Dorsolateral prefrontal cortex (tissue), 120 donors: ENCODE measurements at regions of chr14 and their contacts with region 1.

Region 1: DNA sequence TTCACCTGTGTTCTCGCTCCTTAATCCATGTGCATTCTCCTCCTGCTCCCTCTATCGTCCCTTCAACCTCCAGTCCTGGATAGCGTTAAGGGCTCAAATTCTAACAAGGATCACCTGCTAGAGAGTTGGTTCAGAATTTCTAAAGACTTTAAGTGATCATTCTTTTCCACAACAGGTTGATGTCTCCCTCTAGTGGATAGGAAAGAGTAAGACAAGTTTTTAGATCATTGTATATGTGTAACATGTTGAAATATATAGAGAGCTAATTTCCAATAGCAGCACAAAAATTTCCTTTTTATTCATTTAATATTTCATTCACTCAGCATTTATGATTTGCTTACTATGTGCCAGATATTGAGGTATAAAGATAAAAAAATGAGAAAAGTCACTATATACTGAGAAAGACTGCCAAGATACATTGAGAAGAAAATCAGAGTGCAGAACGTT is 9.3 kb upstream of the ESR2 start:
- DNase-seq: no peak
- H3K4me3 ChIP-seq: no peak overlapping the region
- H3K27ac ChIP-seq: no peak overlapping the region
- H3K27me3 ChIP-seq: no peaks in the 10 kb centered on the region
- CTCF ChIP-seq: peak; percentile 70 to 96 (median 84)

Region 2: DNA sequence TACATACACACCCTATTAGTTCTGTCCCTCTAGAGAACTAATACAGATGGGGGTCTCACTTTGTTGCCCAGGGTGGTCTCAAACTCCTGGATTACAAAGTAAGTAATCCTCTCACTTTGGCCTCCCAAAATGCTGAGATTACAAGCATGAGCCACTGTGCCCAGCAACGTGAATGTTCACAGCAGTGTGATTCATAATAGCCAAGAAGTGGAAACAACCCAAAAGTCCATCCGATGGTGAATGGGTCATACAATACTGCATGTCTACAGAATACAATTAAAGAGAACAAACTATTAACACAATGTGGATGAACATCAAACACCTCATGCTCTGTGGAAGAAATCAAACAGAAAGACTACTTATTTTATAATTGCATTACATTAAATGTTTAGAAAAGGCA is 508.0 kb before region 1 on chr14:
- intact Hi-C with region 1: loop called (anchors 5 kb)
- DNase-seq: no peak
- H3K4me3 ChIP-seq: no peak overlapping the region
- H3K27ac ChIP-seq: no peak overlapping the region
- H3K27me3 ChIP-seq: no peaks in the 10 kb centered on the region
- CTCF ChIP-seq: no peak

Region 3: GRCh38 chr14:64005822-64006221 is 297.7 kb before region 1 on chr14:
- intact Hi-C with region 1: loop called (anchors 5 to 10 kb)
- DNase-seq: no peak
- H3K4me3 ChIP-seq: no peak overlapping the region
- H3K27ac ChIP-seq: no peak overlapping the region
- H3K27me3 ChIP-seq: peaks cover 0 to 6% (median 0%) of the 10 kb centered on the region in 45 donors
- CTCF ChIP-seq: no peak

Region 4: DNA sequence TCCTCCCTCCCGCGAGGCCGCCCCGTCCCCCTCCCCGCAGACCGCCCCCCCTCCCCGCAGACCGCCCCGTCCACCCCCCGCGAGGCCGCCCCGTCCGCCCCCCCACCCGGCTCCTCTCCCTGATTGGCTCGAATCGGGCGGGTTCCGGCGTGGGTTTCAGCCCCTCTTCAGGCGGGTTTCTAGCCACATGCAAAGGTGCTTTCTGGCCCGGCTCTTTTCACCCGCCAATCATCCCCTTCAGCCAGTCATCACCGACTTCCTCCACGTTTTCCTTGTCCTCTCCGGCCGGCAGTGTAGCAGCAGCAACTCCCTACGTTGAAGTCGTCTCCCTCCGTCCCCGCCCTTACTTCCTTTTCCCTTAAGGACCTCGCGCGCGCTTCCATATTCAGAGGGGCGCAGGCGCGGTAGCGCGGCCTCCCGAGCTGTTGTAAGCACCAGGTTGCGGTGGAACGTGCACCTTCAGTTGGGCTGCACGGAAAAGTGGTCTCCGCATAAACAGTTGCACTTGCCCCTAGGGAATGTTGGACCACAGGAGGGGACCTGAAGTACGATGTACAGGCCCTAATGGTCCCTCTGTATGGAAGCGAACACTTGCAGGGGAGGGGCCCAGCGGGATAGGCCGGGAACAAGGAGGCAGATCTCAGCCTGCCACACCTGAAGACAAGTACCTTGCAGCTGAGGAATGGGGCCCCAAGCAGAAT is 35.3 kb after region 1 on chr14:
- intact Hi-C with region 1: no loop called
- DNase-seq: peak; percentile 74 to 97 (median 94)
- H3K4me3 ChIP-seq: peak overlapping the region; percentile 58 to 95 (median 83)
- H3K27ac ChIP-seq: peak overlapping the region; percentile 1 to 93 (median 83)
- H3K27me3 ChIP-seq: no peaks in the 10 kb centered on the region
- CTCF ChIP-seq: peak in 3 of 56 donors; percentile 12 to 25 (median 23)